H1 (cell line): ENCODE measurements at regions of chr19 and their contacts with region 1.

Region 1: GRCh38 chr19:37906869-37907734 is at the start of gene SIPA1L3:
- DNase-seq: peak; percentile 91 to 96
- H3K4me3 ChIP-seq: peak within 1 kb of the TSS; percentile 72 to 92 (median 84)
- H3K27ac ChIP-seq: peak within 1 kb of the TSS; percentile 93
- H3K4me1 ChIP-seq: peaks cover 0 to 21% (median 9%) of the 10 kb centered on the region in 4 experiments; a peak in 6 of 7 replicates
- H3K27me3 ChIP-seq: no peaks in the 10 kb centered on the region
- CTCF ChIP-seq: no peak
- EP300 ChIP-seq: no peak
- POLR2A ChIP-seq: peak in 1 of 2 experiments; percentile 62; a peak in 1 of 3 replicates
- RAD21 ChIP-seq: no peak
- total RNA-seq, gene SIPA1L3: 43.0 and 54.9 TPM in 2 replicates

Region 2: DNA sequence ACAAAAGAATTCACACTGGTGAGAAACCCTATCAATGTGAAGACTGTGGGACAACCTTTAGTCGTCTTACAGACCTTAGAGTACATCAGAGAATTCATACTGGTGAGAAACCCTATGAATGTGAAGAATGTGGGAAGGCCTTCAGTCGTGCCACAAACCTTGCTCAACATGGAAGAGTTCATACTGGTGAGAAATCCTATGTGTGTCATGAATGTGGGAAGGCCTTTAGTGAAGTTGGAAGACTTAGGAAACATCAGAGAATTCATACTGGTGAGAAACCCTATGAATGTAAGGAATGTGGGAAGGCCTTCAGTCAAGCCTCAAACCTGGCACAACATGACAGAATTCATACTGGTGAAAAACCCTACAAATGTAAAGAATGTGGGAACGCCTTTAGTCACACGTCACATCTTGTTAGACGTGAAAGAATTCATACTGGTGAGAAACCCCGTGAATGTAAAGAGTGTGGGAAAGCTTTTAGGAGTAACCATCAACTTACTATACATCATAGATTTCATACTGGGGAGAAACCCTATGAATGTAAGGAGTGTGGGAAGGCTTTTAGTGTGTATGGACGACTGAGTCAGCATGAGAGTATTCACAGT is 103.8 kb before region 1 on chr19:
- CTCF ChIA-PET with region 1: no interaction called
- POLR2A ChIA-PET with region 1: no interaction called
- DNase-seq: no peak
- H3K4me3 ChIP-seq: no peak overlapping the region
- H3K27ac ChIP-seq: no peak overlapping the region
- H3K4me1 ChIP-seq: no peaks in the 10 kb centered on the region
- H3K27me3 ChIP-seq: no peaks in the 10 kb centered on the region
- CTCF ChIP-seq: no peak
- EP300 ChIP-seq: no peak
- POLR2A ChIP-seq: no peak
- RAD21 ChIP-seq: no peak

Region 3: DNA sequence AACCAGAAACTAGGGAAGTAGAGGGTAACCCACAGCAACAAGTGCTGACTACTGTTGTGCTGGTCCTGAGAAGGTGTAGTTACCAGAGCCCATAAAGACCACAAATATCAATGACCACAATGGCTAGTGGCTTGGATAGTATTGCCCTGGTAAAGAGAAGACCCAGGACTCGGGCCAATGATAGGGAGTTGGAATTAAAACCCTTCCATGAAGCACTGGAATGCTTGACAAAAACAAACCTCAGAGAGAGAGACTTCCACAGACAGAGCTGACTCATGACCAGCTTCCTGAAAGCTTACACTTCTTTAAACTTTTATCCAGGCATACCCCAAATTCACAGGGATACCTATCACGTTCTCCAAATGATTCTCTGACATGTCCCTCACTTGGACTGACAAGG is 61.2 kb before region 1 on chr19:
- CTCF ChIA-PET with region 1: no interaction called
- POLR2A ChIA-PET with region 1: no interaction called
- DNase-seq: no peak
- H3K4me3 ChIP-seq: no peak overlapping the region
- H3K27ac ChIP-seq: no peak overlapping the region
- H3K4me1 ChIP-seq: no peaks in the 10 kb centered on the region
- H3K27me3 ChIP-seq: no peaks in the 10 kb centered on the region
- CTCF ChIP-seq: no peak
- EP300 ChIP-seq: no peak
- POLR2A ChIP-seq: no peak
- RAD21 ChIP-seq: no peak

Region 4: GRCh38 chr19:37920591-37921450 is 13.7 kb after region 1 on chr19:
- CTCF ChIA-PET with region 1: interaction called, 12 read pairs
- POLR2A ChIA-PET with region 1: interaction called, 19 read pairs
- DNase-seq: no peak
- H3K4me3 ChIP-seq: no peak overlapping the region
- H3K27ac ChIP-seq: no peak overlapping the region
- H3K4me1 ChIP-seq: peaks cover 0 to under 1% (median 0%) of the 10 kb centered on the region in 4 experiments; a peak in 2 of 7 replicates
- H3K27me3 ChIP-seq: no peaks in the 10 kb centered on the region
- CTCF ChIP-seq: no peak
- EP300 ChIP-seq: no peak
- POLR2A ChIP-seq: no peak
- RAD21 ChIP-seq: no peak

Region 5: GRCh38 chr19:37987356-37988332 is 80.5 kb after region 1 on chr19:
- CTCF ChIA-PET with region 1: interaction called, 259 read pairs
- POLR2A ChIA-PET with region 1: interaction called, 30 read pairs
- DNase-seq: peak in 1 of 2 experiments; percentile 86
- H3K4me3 ChIP-seq: no peak overlapping the region
- H3K27ac ChIP-seq: no peak overlapping the region
- H3K4me1 ChIP-seq: peaks cover 15 to 41% (median 31%) of the 10 kb centered on the region in 4 experiments
- H3K27me3 ChIP-seq: no peaks in the 10 kb centered on the region
- CTCF ChIP-seq: peak; percentile 62 to 73 (median 72)
- EP300 ChIP-seq: no peak
- POLR2A ChIP-seq: no peak
- RAD21 ChIP-seq: peak; percentile 54 to 65

Region 6: DNA sequence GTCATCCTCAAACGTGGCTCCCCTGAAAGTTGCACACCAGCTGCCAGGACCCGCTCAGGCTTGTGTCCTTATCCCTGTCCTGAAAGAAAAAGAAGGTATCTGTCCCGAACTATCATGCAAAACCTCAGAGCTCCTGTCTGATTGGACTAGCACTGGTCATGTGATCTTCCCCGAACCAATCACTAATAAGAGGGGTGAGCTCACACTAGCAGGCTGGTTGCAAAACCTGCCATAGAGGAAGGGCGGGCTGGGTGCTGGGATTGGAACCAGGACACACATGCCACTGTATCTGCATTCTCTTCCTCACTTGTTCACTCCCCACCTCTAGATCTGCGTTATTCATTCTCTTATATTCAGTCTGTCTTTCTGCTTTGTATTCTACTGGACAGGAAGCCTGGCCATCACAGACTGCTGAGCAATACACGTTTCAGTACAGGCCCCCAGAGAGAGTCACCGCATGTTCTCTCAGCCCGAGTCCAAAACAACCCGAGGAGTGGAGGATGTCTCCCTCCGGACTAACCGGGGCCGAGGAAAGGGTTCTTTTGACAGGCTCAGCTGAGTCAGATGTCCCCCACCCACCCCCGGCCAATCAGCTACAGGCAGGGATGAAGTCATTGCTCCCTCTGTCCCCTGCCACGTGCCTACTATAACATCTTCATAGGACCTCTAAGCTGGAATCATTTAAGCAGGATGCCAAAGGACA is 97.6 kb after region 1 on chr19:
- CTCF ChIA-PET with region 1: interaction called, 259 read pairs
- POLR2A ChIA-PET with region 1: interaction called, 50 read pairs
- DNase-seq: peak in 1 of 2 experiments; percentile 78
- H3K4me3 ChIP-seq: peak overlapping the region; percentile 31 to 50 (median 40); a peak in 6 of 8 replicates
- H3K27ac ChIP-seq: peak overlapping the region; percentile 87
- H3K4me1 ChIP-seq: peaks cover 13 to 27% (median 22%) of the 10 kb centered on the region in 4 experiments
- H3K27me3 ChIP-seq: no peaks in the 10 kb centered on the region
- CTCF ChIP-seq: no peak
- EP300 ChIP-seq: no peak
- POLR2A ChIP-seq: peak; percentile 90 to 97
- RAD21 ChIP-seq: no peak

Region 7: GRCh38 chr19:38073841-38074685 is 167.0 kb after region 1 on chr19:
- CTCF ChIA-PET with region 1: interaction called, 57 read pairs
- POLR2A ChIA-PET with region 1: interaction called, 5 read pairs
- DNase-seq: peak; percentile 36 to 65
- H3K4me3 ChIP-seq: no peak overlapping the region
- H3K27ac ChIP-seq: no peak overlapping the region
- H3K4me1 ChIP-seq: no peaks in the 10 kb centered on the region; a peak in 1 of 7 replicates
- H3K27me3 ChIP-seq: no peaks in the 10 kb centered on the region
- CTCF ChIP-seq: peak; percentile 81 to 87 (median 86)
- EP300 ChIP-seq: no peak
- POLR2A ChIP-seq: no peak
- RAD21 ChIP-seq: peak; percentile 88 to 91

Region 8: DNA sequence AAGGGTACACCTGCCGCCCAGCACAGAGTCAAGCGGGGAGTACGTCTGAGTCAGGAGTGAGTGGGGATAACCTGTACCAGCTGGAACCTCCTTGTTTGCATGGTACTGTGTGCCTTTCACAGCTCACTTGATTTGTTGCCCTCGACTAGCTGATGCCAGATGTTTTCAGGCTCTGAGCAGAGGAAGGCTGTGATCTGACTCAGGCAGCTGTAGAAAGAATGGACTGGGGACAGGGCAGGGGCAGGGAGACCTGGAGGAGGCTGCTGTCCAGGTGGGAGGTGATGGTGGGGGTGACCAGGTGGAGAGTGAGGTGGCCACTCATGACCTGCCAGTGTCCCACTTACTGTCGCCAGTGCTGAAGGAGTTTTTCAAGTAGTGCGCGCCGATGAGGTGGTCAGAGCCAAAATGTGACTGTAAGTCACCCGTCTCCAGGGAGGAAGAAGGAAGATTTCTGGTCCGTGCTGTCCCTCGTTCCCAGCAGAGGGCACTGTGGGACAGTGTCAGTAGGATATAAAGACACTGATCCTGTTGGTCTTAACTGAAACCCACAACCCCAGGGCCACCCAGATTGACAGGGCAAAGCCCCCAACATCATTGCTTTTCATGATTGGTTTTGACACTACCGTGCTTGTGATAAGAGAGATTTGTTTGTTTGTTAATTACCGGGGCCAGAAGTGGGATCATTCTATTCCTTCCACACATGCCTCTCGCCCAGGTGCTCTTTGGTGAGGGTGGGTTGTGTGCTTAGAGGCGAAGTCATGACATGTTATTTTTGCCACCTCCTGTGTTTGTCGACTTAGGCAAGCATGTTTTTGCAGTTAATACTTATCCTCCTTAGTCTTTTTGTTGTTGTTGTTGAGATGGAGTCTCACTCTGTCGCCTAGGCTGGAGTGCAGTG is 188.6 kb after region 1 on chr19:
- CTCF ChIA-PET with region 1: interaction called, 15 read pairs
- POLR2A ChIA-PET with region 1: interaction called, 4 read pairs
- DNase-seq: peak; percentile 44 to 85
- H3K4me3 ChIP-seq: no peak overlapping the region
- H3K27ac ChIP-seq: no peak overlapping the region
- H3K4me1 ChIP-seq: peaks cover 0 to 2% (median 0%) of the 10 kb centered on the region in 4 experiments; a peak in 3 of 7 replicates
- H3K27me3 ChIP-seq: no peaks in the 10 kb centered on the region
- CTCF ChIP-seq: peak; percentile 77 to 95 (median 93)
- EP300 ChIP-seq: no peak
- POLR2A ChIP-seq: no peak
- RAD21 ChIP-seq: peak; percentile 77